ENCODE measurements at regions of chr14 and their contacts with region 1.

Region 1: GRCh38 chr14:65517635-65518542 is 105.4 kb downstream of the FUT8 start:
- DNase-seq: no peak
- H3K4me3 Mint-ChIP-seq: peak overlapping the region; percentile 0
- H3K27ac Mint-ChIP-seq: peak overlapping the region; percentile 80
- H3K4me1 Mint-ChIP-seq: peaks cover 39% of the 10 kb centered on the region
- H3K27me3 Mint-ChIP-seq: no peaks in the 10 kb centered on the region

Region 2: DNA sequence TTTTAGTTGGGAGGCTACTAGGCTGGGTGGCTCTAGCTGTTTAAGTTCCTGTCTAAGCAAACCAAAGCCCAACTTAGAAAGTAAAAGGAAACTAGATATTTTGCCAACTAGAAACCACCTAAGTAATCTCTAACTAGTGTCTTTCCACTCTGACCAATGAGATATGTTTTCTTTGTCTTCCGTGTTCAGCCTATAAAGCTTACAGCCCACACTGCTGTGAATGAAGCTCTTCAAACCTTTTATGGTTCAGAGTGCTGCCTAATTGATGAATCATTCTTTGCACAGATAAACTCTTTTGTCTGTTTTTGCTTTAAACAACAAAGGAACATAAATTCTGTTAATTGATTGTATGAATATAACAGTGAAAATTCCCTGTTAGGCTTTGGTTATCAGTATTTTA is 39.3 kb before region 1 on chr14:
- intact Hi-C with region 1: loop called (anchors 5 kb)
- DNase-seq: no peak
- H3K4me3 Mint-ChIP-seq: no peak overlapping the region
- H3K27ac Mint-ChIP-seq: peak overlapping the region; percentile 13
- H3K4me1 Mint-ChIP-seq: peaks cover 53% of the 10 kb centered on the region
- H3K27me3 Mint-ChIP-seq: no peaks in the 10 kb centered on the region

Region 3: GRCh38 chr14:65637780-65638179 is 119.9 kb after region 1 on chr14:
- intact Hi-C with region 1: loop called (anchors 5 kb)
- DNase-seq: peak; percentile 77
- H3K4me3 Mint-ChIP-seq: peak overlapping the region; percentile 23
- H3K27ac Mint-ChIP-seq: peak overlapping the region; percentile 77
- H3K4me1 Mint-ChIP-seq: peaks cover 44% of the 10 kb centered on the region
- H3K27me3 Mint-ChIP-seq: no peaks in the 10 kb centered on the region